ENCODE measurements at regions of chr2 and their contacts with region 1.

Region 1: GRCh38 chr2:68709421-68709911 is 25.1 kb upstream of the ARHGAP25 start:
- DNase-seq: peak; percentile 52
- H3K4me3 ChIP-seq: no peak overlapping the region
- H3K27ac ChIP-seq: no peak overlapping the region
- H3K4me1 ChIP-seq: no peaks in the 10 kb centered on the region
- H3K27me3 ChIP-seq: peaks cover 18 to 45% of the 10 kb centered on the region in 2 experiments
- CTCF ChIP-seq: peak; percentile 72 to 74
- POLR2A ChIP-seq: no peak

Region 2: DNA sequence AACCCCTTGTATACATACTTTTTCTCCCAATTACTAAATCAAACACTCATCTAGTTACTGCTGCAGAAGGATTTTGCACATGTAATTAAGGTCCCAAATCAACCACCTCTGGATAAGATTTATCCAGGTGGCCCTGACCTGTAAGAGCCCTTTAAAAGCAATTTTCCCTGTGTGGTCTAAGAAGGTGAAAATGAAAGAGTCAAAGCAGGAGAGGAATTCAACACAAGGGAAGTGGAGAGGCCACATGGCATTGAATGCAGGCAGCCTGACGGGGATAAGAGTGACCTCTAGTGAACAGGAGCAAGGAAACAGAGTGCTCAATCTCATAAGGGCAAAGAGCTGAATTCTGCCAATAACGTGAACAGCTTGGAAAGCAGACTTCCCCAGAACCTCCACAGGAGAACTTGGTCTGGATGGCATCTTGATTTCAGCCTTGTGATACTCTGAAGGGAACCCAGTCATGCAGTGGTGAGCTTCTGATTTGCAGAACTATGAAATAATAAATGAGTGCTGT is 484.3 kb before region 1 on chr2:
- CTCF ChIA-PET with region 1: no interaction called
- POLR2A ChIA-PET with region 1: no interaction called
- dilution Hi-C with region 1: no loop called
- intact Hi-C with region 1: no loop called
- DNase-seq: peak; percentile 34
- H3K4me3 ChIP-seq: no peak overlapping the region
- H3K27ac ChIP-seq: no peak overlapping the region
- H3K4me1 ChIP-seq: peaks cover 3% of the 10 kb centered on the region
- H3K27me3 ChIP-seq: no peaks in the 10 kb centered on the region
- CTCF ChIP-seq: peak in 1 of 2 donors; percentile 11
- POLR2A ChIP-seq: no peak

Region 3: DNA sequence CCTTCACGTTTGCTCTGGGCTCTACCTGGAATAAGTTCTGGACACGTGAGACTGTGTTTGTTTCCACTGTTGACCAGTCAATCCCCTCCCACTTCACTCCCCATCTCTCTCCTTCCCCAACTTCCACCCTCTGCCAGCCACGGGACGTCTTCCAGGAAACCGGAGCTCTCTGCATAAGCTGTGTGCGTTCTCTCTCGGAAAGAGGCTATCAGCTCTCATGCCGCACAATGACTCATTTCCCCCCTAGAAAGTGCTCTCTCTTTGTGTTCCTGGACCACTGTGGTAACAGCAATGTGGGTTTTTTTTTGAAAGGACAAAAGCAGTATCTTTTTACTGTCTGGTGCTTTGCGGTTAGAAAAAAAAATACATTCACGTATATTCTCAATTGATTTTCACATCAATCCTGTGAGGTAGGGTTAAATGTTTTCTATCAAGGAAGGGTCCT is 55.9 kb before region 1 on chr2:
- CTCF ChIA-PET with region 1: interaction called, 18 read pairs
- POLR2A ChIA-PET with region 1: no interaction called
- dilution Hi-C with region 1: no loop called
- intact Hi-C with region 1: no loop called
- DNase-seq: peak; percentile 86
- H3K4me3 ChIP-seq: peak overlapping the region in 1 of 3 experiments; percentile 2
- H3K27ac ChIP-seq: no peak overlapping the region
- H3K4me1 ChIP-seq: peaks cover 17% of the 10 kb centered on the region
- H3K27me3 ChIP-seq: peaks cover 31 to 35% of the 10 kb centered on the region in 2 experiments
- CTCF ChIP-seq: no peak
- POLR2A ChIP-seq: no peak

Region 4: DNA sequence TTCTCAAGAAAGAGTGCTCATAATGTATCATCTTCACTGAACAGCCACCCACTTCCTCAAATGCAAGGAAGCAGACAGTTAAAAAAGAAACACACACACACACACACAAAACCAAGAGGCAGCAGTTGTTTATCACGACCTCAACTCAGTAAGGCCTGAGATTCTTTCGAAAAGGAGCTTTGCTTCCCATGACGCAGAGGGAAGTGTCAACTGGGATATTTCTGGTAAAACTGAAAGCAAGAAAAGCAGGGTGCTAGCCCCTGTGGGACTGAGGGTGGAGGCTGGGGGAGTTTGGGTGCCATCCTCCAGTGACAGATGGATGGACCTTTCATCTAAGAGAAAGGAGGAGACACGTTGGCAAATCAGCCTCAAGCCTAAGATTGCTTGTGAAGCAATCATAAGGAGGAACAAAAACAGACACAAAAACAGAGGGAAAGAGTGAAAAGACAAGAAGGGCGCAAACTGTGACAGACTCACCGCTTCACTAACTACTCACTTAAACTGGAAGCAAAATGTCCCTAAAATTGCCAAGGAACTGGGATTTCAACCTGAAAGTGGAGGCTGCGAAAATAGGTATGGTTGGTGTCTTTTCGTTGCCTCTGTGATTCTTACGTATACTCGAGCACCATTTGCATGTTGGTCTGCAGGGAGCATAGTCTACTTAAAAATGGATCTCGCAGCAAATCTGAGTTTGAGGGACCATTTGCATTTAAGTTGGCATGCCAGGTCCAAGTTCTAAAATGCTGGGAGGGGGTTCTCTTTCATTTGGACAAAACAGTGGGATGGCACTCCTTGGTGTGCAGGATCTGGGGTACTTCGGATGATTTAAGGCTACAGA is 25.4 kb after region 1 on chr2 and contains the start of gene ARHGAP25:
- CTCF ChIA-PET with region 1: interaction called, 19 read pairs
- POLR2A ChIA-PET with region 1: no interaction called
- dilution Hi-C with region 1: no loop called
- intact Hi-C with region 1: no loop called
- DNase-seq: no peak
- H3K4me3 ChIP-seq: no peak within 1 kb of the TSS
- H3K27ac ChIP-seq: no peak within 1 kb of the TSS
- H3K4me1 ChIP-seq: no peaks in the 10 kb centered on the region
- H3K27me3 ChIP-seq: peaks cover 26 to 34% of the 10 kb centered on the region in 2 experiments
- CTCF ChIP-seq: no peak
- POLR2A ChIP-seq: no peak
- total RNA-seq, gene ARHGAP25: 1.2 and 2.0 TPM in 2 replicates

Region 5: GRCh38 chr2:68901199-68901960 is 191.9 kb after region 1 on chr2:
- CTCF ChIA-PET with region 1: interaction called, 62 read pairs
- POLR2A ChIA-PET with region 1: no interaction called
- dilution Hi-C with region 1: no loop called
- intact Hi-C with region 1: loop called (anchors 1 kb)
- DNase-seq: peak; percentile 19
- H3K4me3 ChIP-seq: no peak overlapping the region
- H3K27ac ChIP-seq: no peak overlapping the region
- H3K4me1 ChIP-seq: peaks cover 4% of the 10 kb centered on the region
- H3K27me3 ChIP-seq: peaks cover 0 to 2% of the 10 kb centered on the region in 2 experiments
- CTCF ChIP-seq: peak; percentile 22 to 37
- POLR2A ChIP-seq: no peak

Region 6: DNA sequence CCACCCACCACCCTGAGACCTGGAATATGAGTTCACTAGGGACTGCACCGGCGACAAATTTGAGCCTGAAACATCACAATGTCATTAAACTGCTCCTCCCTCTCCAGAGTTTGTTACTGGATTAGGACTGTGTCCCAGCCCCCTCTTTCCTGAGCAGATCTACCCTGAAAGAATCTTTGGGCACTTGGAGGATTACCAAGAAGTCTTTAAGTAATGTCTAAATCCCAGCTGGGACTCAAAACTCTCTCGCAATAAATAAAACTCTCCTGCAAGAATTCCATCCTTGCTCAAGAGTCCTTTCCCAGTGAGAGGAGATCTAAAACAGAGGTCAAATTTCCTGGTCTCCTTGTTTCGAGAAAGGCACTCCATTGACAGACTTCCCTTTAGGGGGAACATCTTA is 222.3 kb after region 1 on chr2:
- CTCF ChIA-PET with region 1: interaction called, 517 read pairs
- POLR2A ChIA-PET with region 1: no interaction called
- dilution Hi-C with region 1: no loop called
- intact Hi-C with region 1: no loop called
- DNase-seq: no peak
- H3K4me3 ChIP-seq: no peak overlapping the region
- H3K27ac ChIP-seq: no peak overlapping the region
- H3K4me1 ChIP-seq: no peaks in the 10 kb centered on the region
- H3K27me3 ChIP-seq: peaks cover 8 to 10% of the 10 kb centered on the region in 2 experiments
- CTCF ChIP-seq: no peak
- POLR2A ChIP-seq: no peak

Measured in endothelial cell of umbilical vein (primary cell).